GM13977 (cell line): ENCODE measurements at regions of chr6 and their contacts with region 1.

Region 1: DNA sequence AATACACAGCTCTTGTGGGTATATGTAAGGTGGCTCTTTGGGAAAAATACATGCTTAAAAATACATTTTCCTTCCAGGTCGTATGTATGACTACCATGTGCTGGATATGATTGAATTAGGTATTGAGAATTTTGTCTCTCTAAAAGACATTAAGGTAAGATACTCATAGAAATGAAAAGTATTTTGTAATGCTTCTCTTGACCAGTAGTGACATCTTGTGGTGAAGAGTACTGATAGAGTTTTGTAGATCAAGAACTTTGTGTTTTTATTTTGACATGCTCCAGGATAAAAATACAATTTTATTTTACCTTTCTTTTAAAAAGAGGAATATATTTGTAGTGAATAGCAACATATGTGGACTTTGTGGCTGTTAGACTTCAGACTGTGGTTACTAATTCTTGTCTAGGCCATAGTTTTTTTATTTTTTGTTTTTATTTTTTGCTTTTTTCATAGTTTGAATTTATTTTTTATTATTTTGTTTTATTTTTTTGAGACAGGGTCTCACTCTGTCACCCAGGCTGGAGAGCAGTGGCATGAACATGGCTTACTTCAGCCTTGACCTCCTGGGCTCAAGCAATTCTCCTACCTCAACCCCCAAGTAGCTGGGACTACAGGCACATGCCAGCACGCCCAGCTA is 17.9 kb downstream of the RPF2 start:
- DNase-seq: no peak
- CTCF ChIP-seq: peak; percentile 31

Region 2: GRCh38 chr6:110217266-110217665 is 782.5 kb before region 1 on chr6:
- in situ Hi-C with region 1: no loop called
- DNase-seq: no peak
- CTCF ChIP-seq: no peak

Region 3: DNA sequence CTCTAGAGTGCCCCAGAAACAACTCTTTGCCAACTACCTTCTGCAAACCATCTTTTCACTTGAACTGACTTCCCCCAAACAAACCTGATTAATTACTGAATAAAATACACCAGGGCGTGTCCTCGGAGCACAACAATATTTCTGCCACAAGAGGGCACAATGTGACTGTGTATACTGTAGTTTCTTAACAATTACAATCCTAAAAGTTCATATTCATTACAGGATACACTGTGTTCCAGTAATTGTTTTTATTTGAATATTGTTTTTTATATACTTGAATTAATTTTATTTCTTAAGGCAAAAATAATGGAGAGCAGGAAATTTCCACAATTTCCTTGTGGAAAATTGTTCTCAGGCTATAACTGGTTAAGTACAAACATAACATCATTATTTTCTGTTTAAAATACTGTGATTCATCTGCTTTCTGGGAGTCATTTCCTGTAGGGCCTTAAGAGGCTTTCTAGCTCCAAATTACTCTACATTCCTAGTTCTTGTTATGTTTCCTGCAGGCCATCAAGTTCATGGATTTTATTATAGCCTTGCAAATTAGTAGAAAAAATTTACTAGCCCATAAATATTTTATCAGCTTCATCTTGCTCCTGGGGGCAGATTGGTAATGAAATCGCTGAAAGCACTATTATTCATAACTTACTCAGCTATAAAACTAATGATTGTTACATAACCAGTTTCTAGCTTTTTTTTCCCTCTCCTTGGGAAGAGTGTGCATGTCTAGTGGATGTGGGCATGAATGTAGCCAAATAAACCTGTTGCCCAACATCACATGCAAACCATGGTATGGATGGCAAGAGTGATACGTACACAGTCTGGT is 471.4 kb before region 1 on chr6:
- in situ Hi-C with region 1: loop called (anchors 10 kb)
- DNase-seq: peak; percentile 61
- CTCF ChIP-seq: peak; percentile 75